ENCODE measurements at regions of chr10 and their contacts with region 1.

Region 1: DNA sequence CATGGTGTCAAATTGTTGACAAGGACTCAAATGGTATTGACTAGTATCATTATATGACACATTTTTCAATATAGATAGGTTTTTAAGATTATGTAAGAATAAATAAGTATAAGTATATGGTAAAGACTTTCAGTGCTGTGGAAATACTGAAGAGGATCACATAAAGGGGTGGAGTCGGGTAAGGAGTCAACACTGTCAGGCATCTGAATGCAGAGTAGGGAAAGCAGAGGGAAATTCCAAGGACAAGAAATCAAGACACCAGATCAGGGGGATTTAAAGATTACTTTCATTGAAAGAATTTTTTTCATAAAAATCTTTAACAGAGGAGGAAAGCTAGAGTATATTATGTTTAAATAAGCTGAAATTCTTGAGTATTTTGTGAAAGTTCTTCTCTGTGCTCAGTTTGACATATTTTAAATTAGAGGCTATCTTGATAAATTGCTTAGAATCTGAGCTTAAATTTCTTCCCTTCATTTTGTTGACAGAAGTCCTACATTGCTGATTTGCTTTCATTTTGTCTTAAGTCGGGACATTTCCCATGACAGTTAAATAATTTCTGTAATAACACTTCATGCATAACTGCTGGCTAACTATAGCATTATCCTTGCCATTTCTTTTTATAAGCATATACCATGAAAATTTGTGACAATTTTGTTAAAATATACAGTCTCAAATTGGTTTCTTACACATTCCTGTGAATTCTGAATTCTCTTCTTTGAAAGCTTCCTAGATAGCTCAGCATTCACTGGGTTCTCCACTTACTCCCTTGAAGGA is 244.3 kb downstream of the PRKG1 start:
- DNase-seq: no peak
- ATAC-seq: no peak

Region 2: GRCh38 chr10:51363415-51363814 is 44.8 kb after region 1 on chr10:
- intact Hi-C with region 1: loop called (anchors 5 kb)
- DNase-seq: no peak
- ATAC-seq: no peak

Measured in Right ventricle myocardium inferior (tissue), 1 donor.